Activated B cell treated with CpG ODN at 0.5 μM for 24 hours (primary cell): ENCODE measurements at regions of chr20 and their contacts with region 1.

Region 1: GRCh38 chr20:44217342-44218092 is 6.9 kb upstream of the OSER1 start:
- DNase-seq: peak; percentile 34
- ATAC-seq: peak; percentile 68
- H3K4me3 Mint-ChIP-seq: peak overlapping the region; percentile 46
- H3K27ac Mint-ChIP-seq: no peak overlapping the region
- H3K4me1 Mint-ChIP-seq: peaks cover 33% of the 10 kb centered on the region
- H3K27me3 Mint-ChIP-seq: no peaks in the 10 kb centered on the region
- CTCF ChIP-seq: peak; percentile 37

Region 2: DNA sequence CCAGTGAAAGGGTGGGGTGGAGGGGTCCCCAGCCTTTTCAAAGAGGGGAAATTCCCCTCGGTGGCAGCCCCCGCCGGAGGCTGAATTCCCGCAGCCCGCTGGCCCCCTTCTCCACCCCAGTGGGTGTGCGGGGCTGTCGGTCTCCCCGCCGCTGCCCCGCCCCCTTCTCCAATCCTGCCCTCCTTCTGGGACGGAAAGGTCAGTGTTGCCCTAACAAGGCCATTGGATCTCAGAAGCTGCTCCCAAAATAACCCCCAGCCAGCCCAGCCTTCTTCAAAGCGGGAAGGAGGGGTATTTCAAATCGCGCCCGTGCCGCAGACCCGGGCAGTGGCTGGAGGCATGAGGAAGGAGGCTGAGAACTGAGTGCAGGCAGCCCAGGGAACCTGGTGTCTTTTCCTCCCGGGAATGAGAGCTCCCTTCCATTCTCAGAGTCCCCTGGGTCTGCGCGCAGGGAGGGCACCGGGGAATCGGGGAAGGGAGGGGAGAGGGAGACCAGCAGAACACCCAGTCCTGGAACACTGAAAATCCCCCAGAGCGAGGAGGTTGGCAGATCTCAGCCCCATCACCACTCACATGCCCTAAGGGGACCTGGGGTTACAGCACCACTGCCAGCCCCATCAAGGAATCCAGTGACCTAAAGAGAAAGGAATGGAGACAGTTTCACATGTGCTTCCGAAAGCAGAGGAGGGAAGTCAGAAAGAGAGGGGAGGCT is 30.3 kb before region 1 on chr20 and contains the start of gene JPH2:
- CTCF ChIA-PET with region 1: interaction called, 12 read pairs
- POLR2A ChIA-PET with region 1: no interaction called
- intact Hi-C with region 1: no loop called
- DNase-seq: no peak
- ATAC-seq: peak; percentile 16
- H3K4me3 Mint-ChIP-seq: peak within 1 kb of the TSS; percentile 64
- H3K27ac Mint-ChIP-seq: no peak within 1 kb of the TSS
- H3K4me1 Mint-ChIP-seq: peaks cover 21% of the 10 kb centered on the region
- H3K27me3 Mint-ChIP-seq: peaks cover 41% of the 10 kb centered on the region
- CTCF ChIP-seq: no peak
- total RNA-seq, gene JPH2: not detected in 2 replicates

Region 3: DNA sequence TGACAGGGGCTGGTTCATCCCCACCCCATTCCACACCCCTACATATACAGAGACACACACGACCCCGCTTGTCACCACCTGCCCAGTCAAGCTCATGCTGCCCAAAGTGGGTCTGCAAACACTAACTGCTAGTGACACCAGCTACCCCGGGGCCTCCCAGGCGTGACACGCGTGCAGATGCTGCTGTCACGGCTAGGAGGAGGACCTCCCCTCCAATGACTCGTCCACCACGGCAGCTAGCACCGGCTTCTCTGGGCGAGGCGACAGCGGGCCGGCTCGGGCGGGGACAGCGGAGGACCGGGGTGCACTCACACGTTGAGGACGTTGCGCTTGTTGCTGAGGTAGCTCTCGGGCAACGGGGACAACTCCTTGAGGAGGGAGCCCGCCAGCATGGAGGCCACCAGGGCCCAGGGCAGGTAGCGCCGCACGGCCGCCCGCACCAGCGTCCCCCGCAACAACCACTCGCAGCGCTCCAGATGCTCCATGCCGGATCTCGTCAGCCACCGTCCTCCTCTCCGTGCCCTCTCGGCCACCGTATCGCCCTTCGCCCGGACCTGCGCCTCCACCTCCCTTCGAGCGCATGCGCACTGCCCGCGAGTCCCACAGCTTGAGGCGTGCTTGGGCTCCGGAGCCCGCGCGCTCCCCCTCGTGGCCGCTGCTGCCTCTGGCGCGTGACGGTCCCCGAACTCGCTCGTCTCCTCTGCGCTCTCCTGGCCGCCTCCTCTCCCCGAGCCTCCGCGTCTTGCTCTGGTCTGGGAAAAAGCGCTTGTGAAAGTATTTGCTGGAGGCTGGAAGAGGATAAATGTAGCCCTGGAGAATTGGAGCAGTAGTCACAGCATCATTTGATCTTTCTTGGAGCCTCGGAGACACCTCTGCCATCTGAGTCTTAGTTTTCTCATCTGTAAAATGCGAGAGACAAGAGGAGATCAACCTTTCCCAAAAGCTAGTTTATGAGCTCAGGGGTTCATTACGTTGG is 93.4 kb after region 1 on chr20 and contains the start of gene FITM2:
- CTCF ChIA-PET with region 1: interaction called, 137 read pairs
- POLR2A ChIA-PET with region 1: interaction called, 5 read pairs
- intact Hi-C with region 1: loop called (anchors 1 kb)
- DNase-seq: peak; percentile 99
- ATAC-seq: peak; percentile 97
- H3K4me3 Mint-ChIP-seq: peak within 1 kb of the TSS; percentile 91
- H3K27ac Mint-ChIP-seq: peak within 1 kb of the TSS; percentile 85
- H3K4me1 Mint-ChIP-seq: peaks cover 19% of the 10 kb centered on the region
- H3K27me3 Mint-ChIP-seq: peaks cover 3% of the 10 kb centered on the region
- CTCF ChIP-seq: no peak
- total RNA-seq, gene FITM2: 2.4 and 3.3 TPM in 2 replicates

Region 4: DNA sequence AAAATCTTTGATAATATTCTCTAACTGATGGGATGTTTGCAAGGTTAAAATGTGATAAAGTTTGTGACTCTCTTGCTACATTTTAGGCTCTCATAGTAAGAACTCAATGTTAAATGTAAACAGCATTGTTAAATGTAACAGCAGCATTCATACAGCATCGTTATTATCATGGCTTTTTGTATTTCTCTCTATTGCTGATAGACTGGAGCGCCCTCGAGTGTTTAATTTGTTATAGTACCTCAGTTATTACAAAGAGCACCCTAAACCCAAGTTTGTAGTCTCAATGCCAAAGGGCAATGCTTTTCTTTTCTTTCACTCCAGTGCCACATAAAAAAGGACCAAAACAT is 243.3 kb after region 1 on chr20:
- CTCF ChIA-PET with region 1: interaction called, 4 read pairs
- POLR2A ChIA-PET with region 1: no interaction called
- intact Hi-C with region 1: loop called (anchors 2 kb)
- DNase-seq: no peak
- ATAC-seq: no peak
- H3K4me3 Mint-ChIP-seq: no peak overlapping the region
- H3K27ac Mint-ChIP-seq: no peak overlapping the region
- H3K4me1 Mint-ChIP-seq: no peaks in the 10 kb centered on the region
- H3K27me3 Mint-ChIP-seq: no peaks in the 10 kb centered on the region
- CTCF ChIP-seq: no peak

Region 5: GRCh38 chr20:44733341-44734069 is 516.0 kb after region 1 on chr20:
- CTCF ChIA-PET with region 1: interaction called, 7 read pairs
- POLR2A ChIA-PET with region 1: no interaction called
- intact Hi-C with region 1: loop called (anchors 1 kb)
- DNase-seq: peak; percentile 27
- ATAC-seq: peak; percentile 74
- H3K4me3 Mint-ChIP-seq: no peak overlapping the region
- H3K27ac Mint-ChIP-seq: no peak overlapping the region
- H3K4me1 Mint-ChIP-seq: peaks cover 8% of the 10 kb centered on the region
- H3K27me3 Mint-ChIP-seq: no peaks in the 10 kb centered on the region
- CTCF ChIP-seq: no peak